Dorsolateral prefrontal cortex (tissue), 120 donors: ENCODE measurements at regions of chr11 and their contacts with region 1.

Region 1: DNA sequence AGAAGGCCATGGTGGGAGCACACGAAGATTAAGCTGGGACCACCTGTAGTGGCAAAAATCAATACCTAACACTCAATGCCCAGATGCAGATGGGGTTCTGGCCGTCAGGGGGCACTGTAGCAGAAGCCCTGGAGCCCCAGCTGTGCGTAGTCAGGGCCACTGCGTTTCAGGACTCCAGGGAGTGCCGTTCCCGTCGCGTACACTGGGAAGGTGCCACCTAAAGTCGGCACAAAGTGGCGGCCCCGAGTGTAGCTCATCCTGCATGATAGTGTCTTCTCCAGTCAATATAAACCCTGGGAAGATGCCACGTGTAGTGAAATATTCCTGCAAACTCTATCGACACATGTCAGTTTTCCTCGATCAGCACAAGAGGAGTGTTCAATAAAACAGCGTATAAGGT is 123.8 kb upstream of the NTM start:
- DNase-seq: peak; percentile 7 to 85 (median 72)
- H3K4me3 ChIP-seq: peak overlapping the region in 55 of 59 donors; percentile 17 to 65 (median 43)
- H3K27ac ChIP-seq: peak overlapping the region in 4 of 59 donors; percentile 12 to 44 (median 39)
- H3K27me3 ChIP-seq: peaks cover 0 to 8% (median 0%) of the 10 kb centered on the region in 45 donors
- CTCF ChIP-seq: peak in 55 of 56 donors; percentile 42 to 89 (median 76)

Region 2: DNA sequence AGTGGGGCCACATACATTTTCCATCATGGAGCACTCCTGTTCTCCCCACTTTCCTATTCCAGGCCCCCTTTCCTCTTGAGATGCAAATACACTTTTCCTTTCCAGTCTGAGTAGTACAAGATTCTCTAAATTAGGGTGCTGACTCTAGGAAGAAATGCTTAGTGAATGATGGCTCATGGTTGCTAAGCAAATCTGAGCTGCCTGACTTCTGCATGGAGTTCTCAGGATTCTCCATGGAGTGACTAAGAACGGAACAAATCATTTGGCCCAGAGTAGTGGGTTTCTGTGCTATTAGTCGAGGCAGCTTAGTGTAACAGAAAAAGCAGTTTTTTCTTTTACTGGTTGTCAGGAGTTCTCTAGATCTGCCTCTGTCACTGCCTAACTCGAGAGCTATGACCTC is 58.3 kb after region 1 on chr11:
- intact Hi-C with region 1: loop called in 1 of 2 experiments (anchors 5 kb)
- DNase-seq: no peak
- H3K4me3 ChIP-seq: no peak overlapping the region
- H3K27ac ChIP-seq: peak overlapping the region in 2 of 59 donors; percentile 22 to 41
- H3K27me3 ChIP-seq: peaks cover 0 to 7% (median 0%) of the 10 kb centered on the region in 45 donors
- CTCF ChIP-seq: no peak

Region 3: DNA sequence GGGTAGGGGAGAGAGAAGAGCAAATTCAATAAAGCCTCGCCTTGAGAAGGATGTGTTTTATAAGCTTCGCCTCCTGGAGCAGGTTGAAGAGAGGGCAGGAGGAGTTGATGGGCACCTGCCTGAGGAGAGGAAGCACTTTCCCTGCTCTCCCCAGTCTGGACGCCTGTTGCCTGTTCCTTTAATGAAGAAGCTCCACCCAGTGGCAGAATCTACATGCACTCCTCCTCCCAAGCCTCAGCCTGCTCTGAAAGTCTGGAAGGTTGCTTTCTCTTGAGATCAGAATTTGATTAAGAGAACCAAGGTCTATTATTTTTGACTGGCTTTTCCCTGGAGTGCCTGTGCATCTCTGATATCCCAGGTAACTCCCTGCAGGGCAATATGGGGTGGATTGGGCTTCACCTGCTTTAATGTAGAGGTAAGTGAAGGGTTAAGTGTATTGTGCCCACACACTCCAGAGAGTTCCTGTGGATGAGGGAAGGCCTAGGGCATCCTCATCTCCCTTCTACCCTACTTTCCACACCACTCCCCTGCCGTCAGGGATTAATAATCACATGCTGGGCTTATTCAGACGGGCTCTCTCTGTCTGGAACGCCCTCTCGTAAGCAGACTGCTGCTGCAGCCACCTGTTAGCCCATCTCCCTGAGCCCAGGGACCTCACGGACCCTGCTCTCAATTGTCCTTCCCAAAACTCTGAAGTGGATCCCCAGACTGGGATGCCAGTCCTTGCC is 146.0 kb after region 1 on chr11:
- intact Hi-C with region 1: loop called in 1 of 2 experiments (anchors 5 kb)
- DNase-seq: no peak
- H3K4me3 ChIP-seq: no peak overlapping the region
- H3K27ac ChIP-seq: peak overlapping the region in 3 of 59 donors; percentile 2 to 21 (median 17)
- H3K27me3 ChIP-seq: peaks cover 0 to 2% (median 0%) of the 10 kb centered on the region in 45 donors
- CTCF ChIP-seq: peak in 53 of 56 donors; percentile 18 to 69 (median 45)

Region 4: DNA sequence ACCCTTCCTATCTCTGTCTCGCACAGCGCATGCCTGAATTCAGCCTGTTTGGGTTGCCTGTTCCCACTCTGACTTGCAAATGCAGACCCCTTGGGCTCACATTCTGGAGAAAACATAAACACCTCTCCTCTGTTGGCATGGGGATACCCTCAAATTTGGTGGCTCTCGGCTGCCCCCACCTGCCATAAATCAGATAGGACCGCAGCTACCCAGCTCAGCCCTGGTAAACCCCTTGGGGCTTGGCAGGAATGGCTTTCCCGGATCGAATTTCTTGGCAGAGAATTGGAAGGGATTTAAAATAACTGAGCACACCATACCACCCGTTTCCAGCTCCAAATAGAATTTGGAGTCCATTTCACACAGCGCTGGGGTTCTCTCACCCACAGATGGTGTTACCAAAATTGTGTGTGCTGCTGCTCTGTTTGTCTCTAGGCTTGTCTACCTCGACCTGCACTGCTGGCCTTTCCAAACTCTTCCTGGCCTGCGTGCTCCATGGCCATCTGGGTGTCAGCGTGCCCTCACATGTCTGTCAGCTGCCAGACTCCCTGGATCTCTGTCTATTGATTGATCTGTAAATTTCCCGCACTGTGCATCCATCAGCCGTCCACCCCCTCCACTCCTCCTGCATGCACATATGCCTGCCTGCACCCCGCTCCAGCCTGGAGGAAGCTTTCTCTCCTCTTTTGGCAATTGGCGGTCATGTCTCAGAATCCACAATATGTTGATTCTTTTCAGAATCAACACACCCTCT is 257.7 kb after region 1 on chr11:
- intact Hi-C with region 1: loop called (anchors 5 kb)
- DNase-seq: peak; percentile 26 to 84 (median 76)
- H3K4me3 ChIP-seq: peak overlapping the region in 22 of 59 donors; percentile 3 to 41 (median 24)
- H3K27ac ChIP-seq: peak overlapping the region in 54 of 59 donors; percentile 2 to 86 (median 68)
- H3K27me3 ChIP-seq: no peaks in the 10 kb centered on the region
- CTCF ChIP-seq: peak; percentile 15 to 80 (median 65)